CD4-positive, alpha-beta T cell (primary cell): ENCODE measurements at regions of chr16 and their contacts with region 1.

Region 1: GRCh38 chr16:10743610-10744393 is at the start of gene NUBP1:
- DNase-seq: peak; percentile 98 to 100 (median 99)
- ATAC-seq: peak; percentile 94
- H3K4me3 ChIP-seq: peak within 1 kb of the TSS; percentile 88
- H3K4me3 Mint-ChIP-seq: peak within 1 kb of the TSS; percentile 93
- H3K27ac ChIP-seq: peak within 1 kb of the TSS; percentile 95 to 99
- H3K27ac Mint-ChIP-seq: peak within 1 kb of the TSS; percentile 97
- H3K4me1 ChIP-seq: peaks cover 22% of the 10 kb centered on the region
- H3K4me1 Mint-ChIP-seq: peaks cover 29% of the 10 kb centered on the region
- H3K27me3 ChIP-seq: no peaks in the 10 kb centered on the region
- H3K27me3 Mint-ChIP-seq: no peaks in the 10 kb centered on the region
- CTCF ChIP-seq: no peak
- total RNA-seq, gene NUBP1: 19.3 to 20.1 TPM

Region 2: GRCh38 chr16:8868416-8869211 is 1875.2 kb before region 1 on chr16 and contains the start of gene CARHSP1:
- CTCF ChIA-PET with region 1: no interaction called
- POLR2A ChIA-PET with region 1: no interaction called
- intact Hi-C with region 1: loop called in 1 of 2 experiments (anchors 10 kb)
- DNase-seq: peak; percentile 62 to 92 (median 76)
- ATAC-seq: peak; percentile 74
- H3K4me3 ChIP-seq: peak within 1 kb of the TSS; percentile 85
- H3K4me3 Mint-ChIP-seq: peak within 1 kb of the TSS; percentile 95
- H3K27ac ChIP-seq: peak within 1 kb of the TSS; percentile 32 to 72
- H3K27ac Mint-ChIP-seq: peak within 1 kb of the TSS; percentile 85
- H3K4me1 ChIP-seq: peaks cover 59% of the 10 kb centered on the region
- H3K4me1 Mint-ChIP-seq: peaks cover 50% of the 10 kb centered on the region
- H3K27me3 ChIP-seq: no peaks in the 10 kb centered on the region
- H3K27me3 Mint-ChIP-seq: no peaks in the 10 kb centered on the region
- CTCF ChIP-seq: no peak
- total RNA-seq, gene CARHSP1: 25.5 to 27.8 TPM

Region 3: GRCh38 chr16:10385725-10386516 is 357.9 kb before region 1 on chr16 and contains the start of gene ATF7IP2:
- CTCF ChIA-PET with region 1: no interaction called
- POLR2A ChIA-PET with region 1: interaction called, 8 read pairs
- intact Hi-C with region 1: loop called in 1 of 2 experiments (anchors 10 kb)
- DNase-seq: peak; percentile 73 to 93 (median 83)
- ATAC-seq: peak; percentile 97
- H3K4me3 ChIP-seq: peak within 1 kb of the TSS; percentile 86
- H3K4me3 Mint-ChIP-seq: peak within 1 kb of the TSS; percentile 100
- H3K27ac ChIP-seq: peak within 1 kb of the TSS; percentile 46 to 69
- H3K27ac Mint-ChIP-seq: peak within 1 kb of the TSS; percentile 91
- H3K4me1 ChIP-seq: peaks cover 30% of the 10 kb centered on the region
- H3K4me1 Mint-ChIP-seq: peaks cover 57% of the 10 kb centered on the region
- H3K27me3 ChIP-seq: no peaks in the 10 kb centered on the region
- H3K27me3 Mint-ChIP-seq: no peaks in the 10 kb centered on the region
- CTCF ChIP-seq: no peak
- total RNA-seq, gene ATF7IP2: 82.9 to 86.9 TPM

Region 4: GRCh38 chr16:10937068-10937859 is 193.5 kb after region 1 on chr16:
- CTCF ChIA-PET with region 1: no interaction called
- POLR2A ChIA-PET with region 1: interaction called, 5 read pairs
- intact Hi-C with region 1: loop called (anchors 5 to 10 kb)
- DNase-seq: peak in 2 of 14 experiments; percentile 22 to 33
- ATAC-seq: no peak
- H3K4me3 ChIP-seq: peak overlapping the region; percentile 21
- H3K4me3 Mint-ChIP-seq: peak overlapping the region; percentile 92
- H3K27ac ChIP-seq: no peak overlapping the region
- H3K27ac Mint-ChIP-seq: peak overlapping the region; percentile 74
- H3K4me1 ChIP-seq: peaks cover 70% of the 10 kb centered on the region
- H3K4me1 Mint-ChIP-seq: peaks cover 76% of the 10 kb centered on the region
- H3K27me3 ChIP-seq: no peaks in the 10 kb centered on the region
- H3K27me3 Mint-ChIP-seq: no peaks in the 10 kb centered on the region
- CTCF ChIP-seq: no peak